ENCODE measurements at regions of chr20 and their contacts with region 1.

Region 1: DNA sequence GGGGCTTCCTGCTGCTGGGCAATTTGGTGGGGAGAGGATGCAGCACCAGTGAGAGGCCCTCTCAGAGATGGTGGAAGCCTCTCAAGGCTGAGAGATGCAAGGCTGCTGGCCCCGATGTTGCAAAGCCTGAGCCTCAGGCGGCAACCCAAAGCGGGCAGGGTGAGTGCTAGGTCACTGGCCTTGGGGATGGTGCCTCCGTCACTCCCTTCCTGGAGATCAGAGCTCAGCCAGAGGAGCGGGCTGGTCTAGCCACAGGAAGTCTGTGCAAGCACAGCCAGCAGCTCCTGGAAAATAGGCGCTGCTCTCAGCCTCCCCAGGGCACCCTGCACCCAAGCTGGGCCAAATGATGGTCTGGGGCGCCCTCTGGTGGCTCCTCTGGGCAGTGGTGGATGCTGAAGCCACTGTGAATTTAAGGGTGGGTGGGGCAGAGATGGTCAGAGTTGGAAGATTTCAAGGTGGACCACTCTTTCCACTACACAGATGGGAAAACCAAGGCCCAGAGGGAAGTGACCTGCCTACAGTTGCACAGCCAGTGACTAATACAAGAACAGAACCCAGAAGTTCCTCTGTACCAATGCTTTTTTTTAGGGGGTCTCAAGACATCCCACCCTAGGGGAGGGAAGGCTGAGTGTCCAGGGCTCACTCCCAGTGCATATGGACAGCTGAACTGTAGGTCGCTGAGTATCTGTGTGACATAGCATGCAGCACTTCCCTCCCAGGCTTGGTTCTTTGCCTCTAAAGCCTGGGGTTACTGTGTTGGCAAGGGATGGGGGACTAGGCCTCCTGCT is 20.8 kb downstream of the C20orf203 start:
- DNase-seq: peak; percentile 70
- H3K4me3 ChIP-seq: no peak overlapping the region
- H3K27ac ChIP-seq: no peak overlapping the region
- H3K4me1 ChIP-seq: no peaks in the 10 kb centered on the region
- H3K27me3 ChIP-seq: no peaks in the 10 kb centered on the region
- CTCF ChIP-seq: peak; percentile 93 to 95
- POLR2A ChIP-seq: no peak

Region 2: DNA sequence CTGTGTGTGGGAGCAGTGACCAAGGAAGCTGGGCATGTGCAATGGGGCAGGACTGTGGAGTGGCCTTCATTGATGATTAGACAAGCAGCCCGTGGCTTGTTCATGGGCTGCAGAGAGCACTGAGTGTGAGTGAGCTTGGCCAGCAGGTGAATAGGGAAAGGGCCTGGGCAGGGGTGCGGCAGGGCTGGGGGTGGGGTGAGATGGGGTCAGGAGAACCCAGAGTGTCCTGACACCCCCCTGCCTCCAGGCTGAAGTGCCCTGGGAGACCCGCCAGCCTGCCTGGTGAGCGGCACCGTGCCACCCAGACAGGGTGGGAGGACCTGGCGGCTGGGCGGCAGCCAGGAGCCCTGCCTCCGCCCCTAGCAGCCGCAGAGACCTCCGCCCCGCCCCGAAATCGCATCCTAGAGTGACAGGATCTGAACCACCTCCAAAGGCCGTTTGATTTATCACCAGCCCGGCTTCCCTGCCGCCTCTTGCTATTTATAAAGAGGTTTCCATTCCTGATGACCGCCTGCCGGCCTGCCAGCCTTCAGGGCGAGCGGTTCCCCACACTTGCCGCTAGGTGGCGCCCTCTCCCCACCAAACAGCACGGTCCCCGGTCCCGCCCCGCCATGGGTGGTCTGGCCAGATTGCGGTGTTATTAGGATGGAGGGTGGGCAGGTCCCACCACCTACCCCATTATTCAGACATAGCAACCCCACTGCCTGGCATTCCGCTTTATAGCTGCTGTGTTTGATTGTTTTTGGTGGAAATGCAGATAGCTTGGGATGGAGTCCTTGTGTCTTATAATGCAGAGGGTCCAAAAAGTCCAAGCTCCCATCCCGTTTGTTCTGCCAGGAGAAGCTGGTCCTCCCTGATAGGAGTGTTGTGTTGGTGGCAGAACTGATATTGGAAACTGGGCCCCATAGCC is 830.3 kb before region 1 on chr20:
- CTCF ChIA-PET with region 1: interaction called, 5 read pairs
- POLR2A ChIA-PET with region 1: no interaction called
- dilution Hi-C with region 1: no loop called
- intact Hi-C with region 1: loop called (anchors 1 kb)
- DNase-seq: peak; percentile 62
- H3K4me3 ChIP-seq: no peak overlapping the region
- H3K27ac ChIP-seq: peak overlapping the region; percentile 26
- H3K4me1 ChIP-seq: peaks cover 22% of the 10 kb centered on the region
- H3K27me3 ChIP-seq: no peaks in the 10 kb centered on the region
- CTCF ChIP-seq: peak; percentile 96 to 97
- POLR2A ChIP-seq: no peak

Region 3: GRCh38 chr20:32155017-32155981 is 497.6 kb before region 1 on chr20:
- CTCF ChIA-PET with region 1: interaction called, 3 read pairs
- POLR2A ChIA-PET with region 1: no interaction called
- dilution Hi-C with region 1: no loop called
- intact Hi-C with region 1: loop called (anchors 5 kb)
- DNase-seq: peak; percentile 87
- H3K4me3 ChIP-seq: no peak overlapping the region
- H3K27ac ChIP-seq: peak overlapping the region; percentile 85
- H3K4me1 ChIP-seq: peaks cover 25% of the 10 kb centered on the region
- H3K27me3 ChIP-seq: no peaks in the 10 kb centered on the region
- CTCF ChIP-seq: peak in 1 of 2 donors; percentile 47
- POLR2A ChIP-seq: no peak

Region 4: DNA sequence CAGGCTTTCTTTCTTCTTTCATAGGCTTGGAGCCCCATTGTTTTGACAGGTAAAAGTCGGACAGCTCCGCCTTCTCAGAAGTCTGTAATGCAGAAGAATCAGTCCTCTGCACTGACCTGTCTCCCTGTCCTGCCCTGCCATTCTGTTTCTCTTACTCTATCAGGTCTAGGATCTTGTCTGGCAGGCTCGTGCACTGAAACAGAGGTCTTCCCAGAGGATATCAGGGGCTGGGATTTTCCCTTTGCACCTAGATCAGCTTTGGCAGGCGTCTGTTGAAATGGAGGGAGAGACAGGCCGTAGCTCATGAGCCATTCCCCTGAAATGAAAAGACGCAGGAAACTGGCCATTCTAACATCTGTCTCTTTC is 350.4 kb before region 1 on chr20:
- CTCF ChIA-PET with region 1: no interaction called
- POLR2A ChIA-PET with region 1: interaction called, 10 read pairs
- dilution Hi-C with region 1: no loop called
- intact Hi-C with region 1: no loop called
- DNase-seq: no peak
- H3K4me3 ChIP-seq: no peak overlapping the region
- H3K27ac ChIP-seq: no peak overlapping the region
- H3K4me1 ChIP-seq: peaks cover 10% of the 10 kb centered on the region
- H3K27me3 ChIP-seq: no peaks in the 10 kb centered on the region
- CTCF ChIP-seq: no peak
- POLR2A ChIP-seq: no peak

Region 5: DNA sequence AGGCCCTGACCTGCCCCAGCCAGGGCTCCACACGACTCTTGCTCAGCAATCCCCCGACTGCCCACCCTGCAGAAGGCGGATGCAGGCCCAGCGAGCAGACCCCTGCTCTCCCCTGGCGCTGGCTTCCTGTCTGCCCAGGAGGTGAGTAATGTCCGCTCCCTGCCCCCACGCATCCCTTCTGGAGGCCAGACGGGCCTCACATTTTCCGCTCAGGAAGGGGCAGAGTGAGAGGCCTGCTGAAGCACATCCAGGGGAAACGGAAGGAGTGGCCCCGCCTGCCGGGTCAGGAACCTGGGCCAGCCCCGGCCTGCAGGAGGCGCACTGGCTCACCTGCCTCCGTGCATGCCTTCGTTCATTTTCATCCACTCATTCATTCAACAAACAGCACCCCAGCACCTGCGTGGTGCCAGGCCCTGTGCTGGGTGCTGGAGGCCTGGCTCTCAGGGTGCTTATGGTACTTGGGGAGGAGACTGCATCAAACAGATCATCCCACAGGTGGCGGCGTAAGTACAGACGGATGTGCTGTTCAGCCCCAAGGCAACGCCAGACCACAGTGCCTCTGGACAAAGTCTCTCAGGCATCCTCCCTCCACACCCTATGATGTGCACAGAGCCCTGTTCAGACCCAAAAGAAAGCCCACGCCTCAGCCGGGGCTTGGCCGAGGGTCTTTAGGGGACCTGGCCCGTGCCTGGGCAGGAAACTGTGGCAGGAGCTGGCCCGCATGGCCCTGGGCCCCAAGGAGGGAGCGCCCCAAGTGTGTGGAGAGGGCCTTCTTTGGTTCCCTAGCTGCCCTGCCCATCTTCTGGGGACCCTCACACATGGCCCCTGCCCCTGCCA is 182.7 kb before region 1 on chr20:
- CTCF ChIA-PET with region 1: interaction called, 9 read pairs
- POLR2A ChIA-PET with region 1: no interaction called
- dilution Hi-C with region 1: no loop called
- intact Hi-C with region 1: loop called (anchors 1 kb)
- DNase-seq: peak; percentile 99
- H3K4me3 ChIP-seq: no peak overlapping the region
- H3K27ac ChIP-seq: peak overlapping the region; percentile 97
- H3K4me1 ChIP-seq: peaks cover 94% of the 10 kb centered on the region
- H3K27me3 ChIP-seq: no peaks in the 10 kb centered on the region
- CTCF ChIP-seq: peak; percentile 95 to 97
- POLR2A ChIP-seq: peak; percentile 79

Region 6: DNA sequence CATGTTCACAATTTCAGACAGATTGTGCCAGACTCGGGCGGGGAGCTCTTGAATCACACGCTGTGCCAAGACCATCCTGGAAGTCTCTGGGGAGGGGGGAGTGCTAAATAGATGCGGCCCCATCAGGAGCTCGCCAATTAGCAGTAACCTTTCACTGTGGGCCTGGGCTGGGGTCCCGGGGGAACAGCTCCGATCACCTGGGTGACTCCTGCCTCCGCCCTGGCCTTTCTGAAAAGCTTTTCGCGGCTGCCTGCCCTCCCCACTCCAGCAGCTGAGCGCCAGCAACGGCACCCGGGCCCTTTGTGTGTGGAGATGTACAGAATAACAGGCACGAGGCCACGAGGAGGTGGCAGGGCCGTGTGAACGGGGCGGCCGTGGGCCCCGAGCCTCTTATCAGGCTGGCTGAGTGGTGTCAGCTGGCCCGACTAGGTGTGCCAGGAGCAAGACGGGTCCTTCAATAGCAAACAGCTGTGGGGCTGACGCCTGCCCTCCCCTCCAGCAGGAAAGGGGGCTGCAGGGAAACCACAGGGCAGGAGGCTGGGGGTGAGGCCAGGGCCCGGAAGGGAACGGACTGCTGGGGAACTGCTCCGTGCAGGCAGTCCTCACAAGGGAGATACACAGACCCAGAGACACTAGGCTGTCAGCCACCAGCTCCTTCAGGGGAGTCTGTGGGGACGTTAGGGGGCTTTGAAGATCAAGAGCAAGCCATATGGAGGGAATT is 124.6 kb before region 1 on chr20:
- CTCF ChIA-PET with region 1: interaction called, 246 read pairs
- POLR2A ChIA-PET with region 1: no interaction called
- dilution Hi-C with region 1: no loop called
- intact Hi-C with region 1: no loop called
- DNase-seq: no peak
- H3K4me3 ChIP-seq: no peak overlapping the region
- H3K27ac ChIP-seq: no peak overlapping the region
- H3K4me1 ChIP-seq: no peaks in the 10 kb centered on the region
- H3K27me3 ChIP-seq: peaks cover 0 to 2% of the 10 kb centered on the region in 2 experiments
- CTCF ChIP-seq: no peak
- POLR2A ChIP-seq: no peak

Region 7: DNA sequence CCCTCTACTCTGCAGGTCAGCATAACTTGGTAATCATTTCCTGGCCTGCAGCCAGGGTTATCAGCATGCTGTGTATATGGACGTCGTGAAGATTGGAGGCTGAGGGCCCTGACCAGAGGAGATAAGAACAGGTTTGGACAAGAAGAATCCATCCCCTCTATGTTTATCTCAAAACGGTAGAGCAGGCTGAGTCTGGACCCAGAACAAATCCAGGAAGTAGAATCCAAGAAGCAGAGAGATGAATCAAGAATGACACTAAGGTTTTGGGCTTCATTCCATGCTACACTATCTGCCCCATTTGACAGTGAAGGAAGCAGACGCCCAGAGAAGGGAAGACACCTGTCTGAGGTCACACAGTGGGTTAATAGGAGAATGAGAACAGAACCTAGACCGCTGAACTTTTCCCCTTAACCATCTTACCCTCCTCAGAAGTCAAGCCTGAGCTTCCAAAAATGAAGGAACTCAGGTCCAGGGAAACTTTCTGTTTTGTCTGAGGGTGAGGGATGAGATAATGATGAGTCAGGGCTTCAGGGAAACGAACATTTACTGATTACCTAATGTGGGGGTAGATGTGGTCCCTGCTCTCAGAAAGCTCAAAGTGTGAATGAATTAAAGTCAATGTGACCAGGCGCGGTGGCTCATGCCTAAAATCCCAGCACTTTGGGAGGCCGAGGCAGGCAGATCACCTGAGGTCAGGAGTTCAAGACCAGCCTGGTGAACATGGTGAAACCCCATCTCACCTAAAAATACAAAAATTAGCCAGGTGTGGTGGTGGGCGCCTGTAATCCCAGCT is 99.7 kb after region 1 on chr20:
- CTCF ChIA-PET with region 1: no interaction called
- POLR2A ChIA-PET with region 1: no interaction called
- dilution Hi-C with region 1: no loop called
- intact Hi-C with region 1: no loop called
- DNase-seq: no peak
- H3K4me3 ChIP-seq: no peak overlapping the region
- H3K27ac ChIP-seq: no peak overlapping the region
- H3K4me1 ChIP-seq: peaks cover 10% of the 10 kb centered on the region
- H3K27me3 ChIP-seq: no peaks in the 10 kb centered on the region
- CTCF ChIP-seq: no peak
- POLR2A ChIP-seq: no peak

Region 8: DNA sequence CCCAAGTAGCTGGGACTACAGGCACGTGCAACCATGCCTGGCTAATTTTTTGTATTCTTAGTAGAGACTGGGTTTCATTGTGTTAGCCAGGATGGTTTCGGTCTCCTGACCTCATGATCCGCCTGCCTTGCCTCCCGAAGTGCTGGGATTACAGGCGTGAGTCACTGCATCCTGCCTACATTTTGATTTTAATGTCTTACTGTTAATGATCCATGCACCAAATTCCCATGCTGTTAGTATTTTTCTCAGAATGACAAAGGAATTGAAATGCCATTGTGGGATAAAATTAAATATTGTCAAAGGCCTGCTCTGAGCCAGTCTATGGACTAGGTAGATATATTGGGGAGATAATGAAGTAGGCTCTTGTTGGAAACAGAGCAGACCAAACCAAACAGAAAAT is 865.1 kb after region 1 on chr20:
- CTCF ChIA-PET with region 1: no interaction called
- POLR2A ChIA-PET with region 1: no interaction called
- dilution Hi-C with region 1: no loop called
- intact Hi-C with region 1: no loop called
- DNase-seq: peak; percentile 88
- H3K4me3 ChIP-seq: no peak overlapping the region
- H3K27ac ChIP-seq: peak overlapping the region; percentile 81
- H3K4me1 ChIP-seq: peaks cover 19% of the 10 kb centered on the region
- H3K27me3 ChIP-seq: no peaks in the 10 kb centered on the region
- CTCF ChIP-seq: no peak
- POLR2A ChIP-seq: no peak